Naive thymus-derived CD8-positive, alpha-beta T cell (primary cell): ENCODE measurements at regions of chr9 and their contacts with region 1.

Region 1: DNA sequence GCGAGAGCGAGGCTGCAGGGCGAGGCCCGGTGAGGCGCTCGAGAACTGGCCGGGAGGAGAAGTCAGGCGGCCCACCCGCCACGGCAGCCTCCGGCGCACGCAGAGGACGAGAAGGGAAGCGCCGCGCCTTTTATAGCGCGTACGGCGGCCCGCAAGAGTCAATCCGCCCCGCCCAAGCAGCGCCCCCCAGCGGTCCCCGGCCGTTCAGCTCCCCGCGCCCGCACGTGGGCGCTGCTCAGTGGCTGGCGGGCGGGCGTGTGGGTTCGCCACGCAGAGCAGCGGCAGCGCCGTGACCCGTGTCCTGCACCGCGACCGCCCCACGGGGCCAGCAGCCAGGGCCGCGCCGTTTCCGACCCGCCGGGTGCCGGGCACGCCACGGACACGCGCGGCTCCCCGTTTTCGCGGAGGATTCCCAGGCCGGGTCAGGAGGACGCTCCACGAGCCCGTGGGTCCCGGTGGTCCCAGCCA is 14.6 kb downstream of the LCN10 start:
- DNase-seq: peak; percentile 84 to 96 (median 93)
- ATAC-seq: peak; percentile 77 to 85
- H3K4me3 Mint-ChIP-seq: peak overlapping the region; percentile 56 to 98 (median 92)
- H3K27ac Mint-ChIP-seq: peak overlapping the region in 7 of 10 donors; percentile 34 to 97 (median 60)
- H3K4me1 Mint-ChIP-seq: peaks cover 15 to 40% (median 30%) of the 10 kb centered on the region in 4 donors
- H3K27me3 Mint-ChIP-seq: no peaks in the 10 kb centered on the region

Region 2: GRCh38 chr9:136700959-136701667 is 27.0 kb before region 1 on chr9:
- POLR2A ChIA-PET with region 1: interaction called, 19 read pairs
- DNase-seq: peak in 9 of 10 donors; percentile 31 to 77 (median 65)
- ATAC-seq: peak; percentile 84
- H3K4me3 Mint-ChIP-seq: peak overlapping the region; percentile 73 to 90 (median 85)
- H3K27ac Mint-ChIP-seq: peak overlapping the region; percentile 82 to 96 (median 95)
- H3K4me1 Mint-ChIP-seq: peaks cover 14 to 43% (median 33%) of the 10 kb centered on the region in 4 donors
- H3K27me3 Mint-ChIP-seq: peaks cover 0 to 7% (median 0%) of the 10 kb centered on the region in 5 donors

Region 3: GRCh38 chr9:136713548-136714457 is 14.3 kb before region 1 on chr9:
- POLR2A ChIA-PET with region 1: interaction called, 12 read pairs
- DNase-seq: no peak
- ATAC-seq: no peak
- H3K4me3 Mint-ChIP-seq: peak overlapping the region in 4 of 10 donors; percentile 5 to 50 (median 28)
- H3K27ac Mint-ChIP-seq: peak overlapping the region in 1 of 10 donors; percentile 13
- H3K4me1 Mint-ChIP-seq: peaks cover 4 to 17% (median 10%) of the 10 kb centered on the region in 4 donors
- H3K27me3 Mint-ChIP-seq: peaks cover 2 to 46% (median 30%) of the 10 kb centered on the region in 5 donors

Region 4: DNA sequence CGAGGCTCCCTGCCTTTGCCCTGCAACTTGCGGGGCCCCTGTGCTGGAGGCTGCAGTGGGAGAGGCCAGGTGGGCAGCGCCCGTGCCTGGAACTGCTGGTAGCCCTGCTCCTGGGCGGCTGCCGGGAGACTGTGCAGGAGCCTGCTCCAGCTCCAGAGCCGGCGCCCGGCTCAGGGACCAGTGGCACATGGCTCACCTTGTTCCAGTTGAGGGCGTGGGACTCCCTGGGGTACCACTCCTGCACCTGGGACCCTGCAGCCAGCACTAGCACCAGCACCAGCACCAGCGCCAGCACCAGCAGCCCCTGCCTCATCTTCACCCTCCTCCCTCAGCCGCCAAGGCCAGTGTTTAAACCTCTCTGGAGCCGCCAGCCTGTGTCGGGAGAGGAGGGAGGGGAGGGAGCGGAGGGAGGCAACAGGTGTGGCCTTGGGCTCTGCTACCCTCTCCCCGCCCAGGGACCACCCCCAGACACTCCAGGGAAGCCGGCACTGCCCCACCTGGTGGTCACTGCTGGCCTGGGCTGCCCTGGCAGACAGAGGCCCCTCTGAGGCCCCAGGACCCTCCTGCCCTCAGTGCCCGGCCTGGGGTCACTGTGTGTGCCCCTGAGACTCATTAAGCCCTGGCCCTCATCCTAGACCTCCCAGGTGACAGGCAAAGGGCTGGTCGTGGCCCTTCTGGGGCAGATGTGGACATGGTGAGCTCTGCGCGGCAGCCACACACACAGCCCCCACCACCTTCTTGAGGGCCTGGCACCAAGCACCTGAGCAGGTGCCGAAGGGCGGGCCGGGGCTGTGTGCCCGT is 14.7 kb after region 1 on chr9 and contains the start of gene LCN10:
- POLR2A ChIA-PET with region 1: interaction called, 38 read pairs
- DNase-seq: no peak
- ATAC-seq: no peak
- H3K4me3 Mint-ChIP-seq: peak within 1 kb of the TSS; percentile 62 to 88 (median 78)
- H3K27ac Mint-ChIP-seq: peak within 1 kb of the TSS in 5 of 10 donors; percentile 49 to 84 (median 74)
- H3K4me1 Mint-ChIP-seq: peaks cover 2 to 14% (median 9%) of the 10 kb centered on the region in 4 donors
- H3K27me3 Mint-ChIP-seq: no peaks in the 10 kb centered on the region
- polyA plus RNA-seq, gene LCN10: 0.60 to 6.6 (median 3.1) TPM

Region 5: DNA sequence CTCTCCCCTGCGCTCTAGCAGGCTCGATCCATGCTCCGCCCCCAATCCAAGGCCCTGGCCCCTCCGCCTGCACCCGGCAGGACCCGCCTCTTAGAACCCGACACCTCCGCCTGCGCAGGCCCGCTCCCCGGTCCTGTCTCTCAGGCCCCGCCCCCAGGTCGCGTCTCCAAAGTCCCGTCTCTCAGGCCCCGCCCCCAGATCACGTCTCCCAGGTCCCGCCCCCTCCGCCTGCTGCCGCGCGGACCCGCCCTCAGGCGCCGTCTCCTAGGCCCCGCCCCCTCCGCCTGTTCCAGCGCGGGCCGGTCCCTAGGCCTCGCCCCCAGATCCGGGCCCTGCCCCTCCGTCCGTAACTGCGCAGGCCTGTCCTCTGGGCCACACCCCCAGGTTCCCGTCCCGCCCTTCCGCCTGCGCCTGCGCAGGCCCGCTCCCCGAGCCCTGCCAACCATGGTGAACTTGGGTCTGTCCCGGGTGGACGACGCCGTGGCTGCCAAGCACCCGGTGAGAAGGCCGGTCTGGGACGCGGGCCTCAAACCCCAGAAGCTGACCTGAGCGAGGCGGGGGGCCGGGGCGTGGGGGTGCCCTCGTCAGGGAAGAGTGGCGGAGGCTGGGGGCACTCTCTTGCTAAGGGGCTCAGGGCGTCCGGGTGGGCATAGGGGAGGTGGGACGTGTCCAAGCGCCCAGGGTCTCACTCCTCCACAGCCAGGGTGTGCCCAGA is 63.0 kb after region 1 on chr9 and contains the start of gene TMEM141:
- POLR2A ChIA-PET with region 1: interaction called, 10 read pairs
- DNase-seq: peak; percentile 97 to 100 (median 100)
- ATAC-seq: peak; percentile 87
- H3K4me3 Mint-ChIP-seq: peak within 1 kb of the TSS; percentile 83 to 92 (median 86)
- H3K27ac Mint-ChIP-seq: peak within 1 kb of the TSS; percentile 70 to 98 (median 96)
- H3K4me1 Mint-ChIP-seq: peaks cover 5 to 38% (median 34%) of the 10 kb centered on the region in 4 donors
- H3K27me3 Mint-ChIP-seq: peaks cover 0 to 5% (median 0%) of the 10 kb centered on the region in 5 donors
- polyA plus RNA-seq, gene TMEM141: 34.2 to 40.5 (median 37.3) TPM